ENCODE measurements at regions of chr12 and their contacts with region 1.

Region 1: GRCh38 chr12:55973598-55974307 is at the start of gene RAB5B:
- DNase-seq: peak; percentile 100
- H3K4me3 ChIP-seq: peak within 1 kb of the TSS; percentile 94
- H3K27ac ChIP-seq: peak within 1 kb of the TSS; percentile 87
- H3K27me3 ChIP-seq: no peaks in the 10 kb centered on the region
- CTCF ChIP-seq: peak; percentile 29; the same call in 1 of the 2 replicates
- polyA plus RNA-seq, gene RAB5B: 136 and 157 TPM in 2 replicates

Region 2: GRCh38 chr12:56293795-56294194 is 320.0 kb after region 1 on chr12:
- CTCF ChIA-PET with region 1: no interaction called
- POLR2A ChIA-PET with region 1: interaction called, 14 read pairs
- DNase-seq: no peak
- H3K4me3 ChIP-seq: no peak overlapping the region
- H3K27ac ChIP-seq: no peak overlapping the region
- H3K27me3 ChIP-seq: no peaks in the 10 kb centered on the region
- CTCF ChIP-seq: no peak

Region 3: GRCh38 chr12:56461235-56462159 is 487.7 kb after region 1 on chr12:
- CTCF ChIA-PET with region 1: no interaction called
- POLR2A ChIA-PET with region 1: no interaction called
- DNase-seq: no peak
- H3K4me3 ChIP-seq: no peak overlapping the region
- H3K27ac ChIP-seq: no peak overlapping the region
- H3K27me3 ChIP-seq: no peaks in the 10 kb centered on the region
- CTCF ChIP-seq: no peak

Measured in AG04450 (cell line).